WTC11 (cell line): ENCODE measurements at regions of chr10 and their contacts with region 1.

Region 1: GRCh38 chr10:101602761-101603398 is 14.8 kb downstream of the DPCD start:
- DNase-seq: peak; percentile 94
- ATAC-seq: peak; percentile 96
- H3K4me3 Mint-ChIP-seq: no peak overlapping the region
- H3K27ac Mint-ChIP-seq: peak overlapping the region; percentile 45; the same call in 1 of the 2 replicates
- H3K4me1 Mint-ChIP-seq: peaks cover 10% of the 10 kb centered on the region
- H3K27me3 Mint-ChIP-seq: no peaks in the 10 kb centered on the region
- CTCF ChIP-seq: peak; percentile 96

Region 2: DNA sequence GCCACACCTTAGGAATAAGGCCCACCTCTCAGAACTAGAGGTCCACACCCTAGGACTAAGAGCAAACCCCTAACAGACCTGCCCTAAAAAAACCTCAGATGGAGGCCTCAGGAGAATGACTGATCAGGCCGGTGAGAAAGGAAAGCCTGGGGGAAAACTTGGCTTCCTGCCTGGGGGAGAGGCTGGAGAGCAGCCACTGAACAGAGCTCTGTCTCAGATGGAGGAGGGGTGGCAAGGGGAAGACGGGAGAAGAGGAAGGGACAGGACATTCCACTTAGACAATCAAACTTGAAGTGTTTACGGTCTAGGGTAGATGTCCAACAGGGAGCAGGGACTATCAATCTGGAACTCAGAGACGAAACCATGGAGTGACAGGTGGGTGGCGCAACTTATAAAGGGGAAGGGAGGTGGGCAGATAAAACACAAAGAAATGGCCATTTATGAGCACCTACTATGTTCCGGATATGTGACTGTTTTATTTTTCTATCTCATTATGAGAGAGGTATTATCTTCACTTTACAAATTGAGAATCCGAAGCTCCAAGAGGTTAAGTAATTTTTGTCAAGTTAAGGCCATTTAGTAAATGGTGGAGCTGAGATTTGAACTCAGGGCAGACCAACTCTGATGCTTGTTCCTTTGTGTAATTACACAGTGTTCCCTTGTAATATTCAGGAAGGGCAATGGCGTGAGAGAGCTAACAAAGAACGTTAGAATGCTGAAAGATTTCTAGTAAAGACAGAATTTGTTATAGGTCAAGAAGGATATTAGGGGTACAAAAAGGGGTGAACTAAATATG is 1675.8 kb before region 1 on chr10:
- CTCF ChIA-PET with region 1: no interaction called
- POLR2A ChIA-PET with region 1: no interaction called
- DNase-seq: no peak
- ATAC-seq: no peak
- H3K4me3 Mint-ChIP-seq: 0 out of 2 replicates have a peak overlapping the region, but pooled peaks have one; percentile 14
- H3K27ac Mint-ChIP-seq: peak overlapping the region; percentile 72
- H3K4me1 Mint-ChIP-seq: peaks cover 54% of the 10 kb centered on the region
- H3K27me3 Mint-ChIP-seq: no peaks in the 10 kb centered on the region
- CTCF ChIP-seq: no peak

Region 3: DNA sequence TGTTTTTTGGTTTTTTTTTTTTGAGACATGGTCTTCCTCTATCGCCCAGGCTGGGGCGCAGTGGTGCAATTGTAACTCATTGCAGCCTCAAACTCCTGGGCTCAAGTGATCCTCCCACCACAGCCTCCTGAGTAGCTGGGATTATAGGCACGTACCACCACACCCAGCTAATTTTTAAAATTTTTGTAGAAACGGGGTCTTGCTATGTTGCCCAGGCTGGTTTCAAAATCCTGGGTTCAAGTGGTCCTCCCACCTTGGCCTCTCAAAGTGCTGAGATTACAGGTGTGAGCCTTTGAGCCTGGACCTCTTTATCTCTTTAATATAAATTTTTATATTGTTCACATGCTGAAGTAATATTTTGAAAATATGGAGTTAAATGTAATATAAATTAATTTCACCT is 345.4 kb before region 1 on chr10:
- CTCF ChIA-PET with region 1: no interaction called
- POLR2A ChIA-PET with region 1: no interaction called
- DNase-seq: no peak
- ATAC-seq: no peak
- H3K4me3 Mint-ChIP-seq: no peak overlapping the region
- H3K27ac Mint-ChIP-seq: no peak overlapping the region
- H3K4me1 Mint-ChIP-seq: peaks cover 32% of the 10 kb centered on the region
- H3K27me3 Mint-ChIP-seq: peaks cover 22% of the 10 kb centered on the region
- CTCF ChIP-seq: no peak

Region 4: GRCh38 chr10:101429423-101429822 is 173.5 kb before region 1 on chr10:
- CTCF ChIA-PET with region 1: no interaction called
- POLR2A ChIA-PET with region 1: no interaction called
- DNase-seq: no peak
- ATAC-seq: no peak
- H3K4me3 Mint-ChIP-seq: no peak overlapping the region
- H3K27ac Mint-ChIP-seq: no peak overlapping the region
- H3K4me1 Mint-ChIP-seq: no peaks in the 10 kb centered on the region
- H3K27me3 Mint-ChIP-seq: no peaks in the 10 kb centered on the region
- CTCF ChIP-seq: no peak

Region 5: GRCh38 chr10:101587725-101588653 is 14.9 kb before region 1 on chr10 and contains the starts of genes DPCD and POLL:
- CTCF ChIA-PET with region 1: interaction called, 33 read pairs
- POLR2A ChIA-PET with region 1: no interaction called
- DNase-seq: peak; percentile 96
- ATAC-seq: peak; percentile 96
- H3K4me3 Mint-ChIP-seq: peak within 1 kb of the TSS; percentile 94
- H3K27ac Mint-ChIP-seq: peak within 1 kb of the TSS; percentile 36; the same call in 1 of the 2 replicates
- H3K4me1 Mint-ChIP-seq: peaks cover 16% of the 10 kb centered on the region
- H3K27me3 Mint-ChIP-seq: no peaks in the 10 kb centered on the region
- CTCF ChIP-seq: no peak
- total RNA-seq, gene DPCD: 21.8 to 23.8 TPM (median 22.0 TPM) in 3 replicates
- total RNA-seq, gene POLL: 40.7 to 46.2 TPM (median 41.3 TPM) in 3 replicates

Region 6: DNA sequence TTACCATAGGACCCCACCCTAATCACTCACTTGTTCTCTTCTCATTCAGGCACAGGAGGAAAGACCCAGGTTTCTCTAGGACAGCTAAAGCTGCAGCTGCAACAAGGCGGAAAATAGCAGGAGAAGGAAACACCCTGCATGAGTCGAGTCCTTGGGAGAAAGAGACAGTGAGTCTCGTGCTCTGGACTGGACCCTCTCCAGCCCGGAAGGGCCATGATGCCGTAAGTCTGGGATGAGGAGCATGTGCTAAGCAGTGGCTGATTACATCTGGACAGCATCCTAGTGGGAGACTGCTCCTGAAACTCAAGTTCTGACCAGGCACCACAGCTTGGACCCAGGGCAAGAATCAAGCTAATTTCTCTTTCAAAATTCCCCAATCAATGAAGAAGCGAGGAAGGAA is 52.7 kb after region 1 on chr10:
- CTCF ChIA-PET with region 1: interaction called, 37 read pairs
- POLR2A ChIA-PET with region 1: no interaction called
- DNase-seq: no peak
- ATAC-seq: no peak
- H3K4me3 Mint-ChIP-seq: no peak overlapping the region
- H3K27ac Mint-ChIP-seq: no peak overlapping the region
- H3K4me1 Mint-ChIP-seq: peaks cover 20% of the 10 kb centered on the region
- H3K27me3 Mint-ChIP-seq: no peaks in the 10 kb centered on the region
- CTCF ChIP-seq: no peak

Region 7: GRCh38 chr10:101716851-101717659 is 114.2 kb after region 1 on chr10:
- CTCF ChIA-PET with region 1: interaction called, 14 read pairs
- POLR2A ChIA-PET with region 1: no interaction called
- DNase-seq: no peak
- ATAC-seq: no peak
- H3K4me3 Mint-ChIP-seq: no peak overlapping the region
- H3K27ac Mint-ChIP-seq: no peak overlapping the region
- H3K4me1 Mint-ChIP-seq: peaks cover 8% of the 10 kb centered on the region
- H3K27me3 Mint-ChIP-seq: peaks cover 3% of the 10 kb centered on the region; the same call in 1 of the 2 replicates
- CTCF ChIP-seq: no peak

Region 8: DNA sequence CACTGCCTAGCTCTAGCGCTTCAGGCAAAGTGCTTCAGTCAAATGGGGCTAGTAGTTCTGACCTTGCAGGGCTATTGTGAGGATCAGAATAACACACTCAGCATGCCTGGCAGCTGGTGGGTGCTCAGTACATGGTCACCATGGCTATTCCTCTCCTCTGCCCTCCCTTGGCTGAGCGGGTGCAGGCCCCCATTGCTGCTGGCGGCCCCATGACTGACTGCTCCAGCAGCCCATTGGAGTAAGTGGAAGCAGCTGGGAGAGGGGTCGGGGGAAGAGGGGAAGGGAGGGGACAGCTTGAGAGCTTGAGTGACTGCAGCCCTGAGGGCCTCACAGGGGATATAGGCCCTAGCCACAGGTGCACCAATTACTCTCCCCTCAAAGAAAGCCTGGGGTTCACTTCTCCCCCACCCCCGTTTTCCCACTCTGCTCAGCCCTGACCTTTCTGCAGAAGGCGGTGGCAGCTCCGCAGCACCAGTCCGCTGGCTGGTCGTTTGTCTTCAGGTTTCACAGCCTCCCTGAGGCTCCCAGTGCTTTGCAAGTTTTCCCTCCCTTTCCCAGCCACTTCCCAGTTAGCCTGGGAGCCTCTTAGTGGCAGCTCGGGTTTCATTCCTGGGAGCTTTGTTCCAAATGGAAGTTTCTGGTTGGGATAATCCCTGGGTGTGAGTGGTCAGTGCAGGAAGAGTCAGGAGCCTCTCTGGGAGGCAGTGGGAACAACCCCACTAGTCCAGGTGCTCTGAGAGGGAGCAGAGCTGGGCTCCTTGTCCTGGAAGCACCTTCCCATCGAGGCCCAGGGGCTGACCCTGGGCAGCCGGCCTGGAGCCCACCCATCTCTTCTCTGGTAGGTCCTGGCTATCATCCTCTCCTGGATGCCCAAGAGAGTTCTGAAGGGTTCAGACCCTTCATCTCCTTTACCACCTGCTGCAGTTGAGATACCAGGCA is 156.7 kb after region 1 on chr10:
- CTCF ChIA-PET with region 1: interaction called, 56 read pairs
- POLR2A ChIA-PET with region 1: no interaction called
- DNase-seq: no peak
- ATAC-seq: peak; percentile 83
- H3K4me3 Mint-ChIP-seq: no peak overlapping the region
- H3K27ac Mint-ChIP-seq: no peak overlapping the region
- H3K4me1 Mint-ChIP-seq: peaks cover 19% of the 10 kb centered on the region
- H3K27me3 Mint-ChIP-seq: peaks cover 11% of the 10 kb centered on the region
- CTCF ChIP-seq: no peak

Region 9: GRCh38 chr10:101782811-101783735 is 180.2 kb after region 1 on chr10 and contains the start of gene NPM3:
- CTCF ChIA-PET with region 1: interaction called, 370 read pairs
- POLR2A ChIA-PET with region 1: interaction called, 6 read pairs
- DNase-seq: peak; percentile 93
- ATAC-seq: peak; percentile 40
- H3K4me3 Mint-ChIP-seq: peak within 1 kb of the TSS; percentile 100
- H3K27ac Mint-ChIP-seq: peak within 1 kb of the TSS; percentile 92
- H3K4me1 Mint-ChIP-seq: peaks cover 47% of the 10 kb centered on the region
- H3K27me3 Mint-ChIP-seq: peaks cover 11% of the 10 kb centered on the region
- CTCF ChIP-seq: no peak
- total RNA-seq, gene NPM3: 223 to 260 TPM (median 229 TPM) in 3 replicates